Calu3 (cell line): ENCODE measurements at regions of chr3 and their contacts with region 1.

Region 1: GRCh38 chr3:192917404-192918274 is at the start of gene MB21D2:
- DNase-seq: peak; percentile 87
- H3K4me3 Mint-ChIP-seq: peak within 1 kb of the TSS; percentile 93
- H3K27ac Mint-ChIP-seq: peak within 1 kb of the TSS; percentile 65
- H3K4me1 Mint-ChIP-seq: peaks cover 52% of the 10 kb centered on the region
- H3K27me3 Mint-ChIP-seq: no peaks in the 10 kb centered on the region
- CTCF ChIP-seq: no peak
- total RNA-seq, gene MB21D2: 11.9 and 12.6 TPM in 2 replicates

Region 2: GRCh38 chr3:192275741-192276355 is 641.8 kb before region 1 on chr3:
- CTCF ChIA-PET with region 1: no interaction called
- intact Hi-C with region 1: no loop called
- DNase-seq: no peak
- H3K4me3 Mint-ChIP-seq: no peak overlapping the region
- H3K27ac Mint-ChIP-seq: no peak overlapping the region
- H3K4me1 Mint-ChIP-seq: peaks cover 37% of the 10 kb centered on the region
- H3K27me3 Mint-ChIP-seq: no peaks in the 10 kb centered on the region
- CTCF ChIP-seq: no peak

Region 3: GRCh38 chr3:192851821-192852424 is 65.7 kb before region 1 on chr3:
- CTCF ChIA-PET with region 1: interaction called, 14 read pairs
- intact Hi-C with region 1: loop called (anchors 5 kb)
- DNase-seq: peak; percentile 97
- H3K4me3 Mint-ChIP-seq: peak overlapping the region; percentile 35
- H3K27ac Mint-ChIP-seq: peak overlapping the region; percentile 56
- H3K4me1 Mint-ChIP-seq: peaks cover 38% of the 10 kb centered on the region
- H3K27me3 Mint-ChIP-seq: no peaks in the 10 kb centered on the region
- CTCF ChIP-seq: no peak

Region 4: GRCh38 chr3:192887047-192887446 is 30.6 kb before region 1 on chr3:
- CTCF ChIA-PET with region 1: interaction called, 35 read pairs
- intact Hi-C with region 1: loop called (anchors 2 kb)
- DNase-seq: peak; percentile 77
- H3K4me3 Mint-ChIP-seq: peak overlapping the region; percentile 60
- H3K27ac Mint-ChIP-seq: peak overlapping the region; percentile 88
- H3K4me1 Mint-ChIP-seq: peaks cover 93% of the 10 kb centered on the region
- H3K27me3 Mint-ChIP-seq: no peaks in the 10 kb centered on the region
- CTCF ChIP-seq: no peak

Region 5: GRCh38 chr3:192896689-192897431 is 20.8 kb before region 1 on chr3:
- CTCF ChIA-PET with region 1: interaction called, 10 read pairs
- intact Hi-C with region 1: loop called (anchors 1 kb)
- DNase-seq: peak; percentile 66
- H3K4me3 Mint-ChIP-seq: peak overlapping the region; percentile 38
- H3K27ac Mint-ChIP-seq: peak overlapping the region; percentile 88
- H3K4me1 Mint-ChIP-seq: peaks cover 85% of the 10 kb centered on the region
- H3K27me3 Mint-ChIP-seq: no peaks in the 10 kb centered on the region
- CTCF ChIP-seq: no peak

Region 6: GRCh38 chr3:193040836-193041672 is 123.4 kb after region 1 on chr3:
- CTCF ChIA-PET with region 1: interaction called, 4 read pairs
- intact Hi-C with region 1: loop called (anchors 1 kb)
- DNase-seq: peak; percentile 30
- H3K4me3 Mint-ChIP-seq: no peak overlapping the region
- H3K27ac Mint-ChIP-seq: no peak overlapping the region
- H3K4me1 Mint-ChIP-seq: no peaks in the 10 kb centered on the region
- H3K27me3 Mint-ChIP-seq: no peaks in the 10 kb centered on the region
- CTCF ChIP-seq: peak; percentile 33

Region 7: GRCh38 chr3:193129601-193130000 is 212.0 kb after region 1 on chr3:
- CTCF ChIA-PET with region 1: no interaction called
- intact Hi-C with region 1: loop called (anchors 1 kb)
- DNase-seq: peak; percentile 53
- H3K4me3 Mint-ChIP-seq: no peak overlapping the region
- H3K27ac Mint-ChIP-seq: no peak overlapping the region
- H3K4me1 Mint-ChIP-seq: peaks cover under 1% of the 10 kb centered on the region
- H3K27me3 Mint-ChIP-seq: peaks cover 28% of the 10 kb centered on the region
- CTCF ChIP-seq: no peak

Region 8: DNA sequence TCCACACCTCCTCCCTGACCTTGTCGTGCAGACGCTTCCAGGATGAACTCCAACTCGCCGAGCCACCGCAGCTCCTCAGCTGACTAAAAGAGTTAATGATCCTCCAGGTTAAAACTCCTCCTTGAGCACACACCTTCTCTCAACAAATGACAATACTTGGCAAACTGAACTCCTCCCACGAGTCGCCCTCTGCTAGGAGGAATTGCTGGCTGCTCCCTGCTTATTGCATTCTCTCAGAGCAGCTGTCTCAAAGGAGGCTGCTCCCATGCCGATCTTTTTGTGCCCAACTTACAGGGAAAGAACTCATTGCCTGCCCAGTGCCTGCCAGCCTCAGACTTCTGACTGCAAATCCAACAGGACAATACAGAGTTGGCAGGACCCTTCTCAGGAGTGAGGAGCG is 637.2 kb after region 1 on chr3 and contains the start of gene ATP13A4:
- CTCF ChIA-PET with region 1: no interaction called
- intact Hi-C with region 1: loop called (anchors 10 kb)
- DNase-seq: peak; percentile 84
- H3K4me3 Mint-ChIP-seq: peak within 1 kb of the TSS; percentile 81
- H3K27ac Mint-ChIP-seq: peak within 1 kb of the TSS; percentile 91
- H3K4me1 Mint-ChIP-seq: peaks cover 72% of the 10 kb centered on the region
- H3K27me3 Mint-ChIP-seq: no peaks in the 10 kb centered on the region
- CTCF ChIP-seq: no peak
- total RNA-seq, gene ATP13A4: 24.6 and 31.9 TPM in 2 replicates